ENCODE measurements at regions of chr15 and their contacts with region 1.

Region 1: GRCh38 chr15:40754883-40755811 is at the start of gene RMDN3:
- DNase-seq: peak; percentile 94
- H3K4me3 Mint-ChIP-seq: peak within 1 kb of the TSS; percentile 91
- H3K27ac Mint-ChIP-seq: peak within 1 kb of the TSS; percentile 97
- H3K4me1 Mint-ChIP-seq: peaks cover 38% of the 10 kb centered on the region
- H3K27me3 Mint-ChIP-seq: no peaks in the 10 kb centered on the region
- total RNA-seq, gene RMDN3: 39.0 and 42.2 TPM in 2 replicates

Region 2: DNA sequence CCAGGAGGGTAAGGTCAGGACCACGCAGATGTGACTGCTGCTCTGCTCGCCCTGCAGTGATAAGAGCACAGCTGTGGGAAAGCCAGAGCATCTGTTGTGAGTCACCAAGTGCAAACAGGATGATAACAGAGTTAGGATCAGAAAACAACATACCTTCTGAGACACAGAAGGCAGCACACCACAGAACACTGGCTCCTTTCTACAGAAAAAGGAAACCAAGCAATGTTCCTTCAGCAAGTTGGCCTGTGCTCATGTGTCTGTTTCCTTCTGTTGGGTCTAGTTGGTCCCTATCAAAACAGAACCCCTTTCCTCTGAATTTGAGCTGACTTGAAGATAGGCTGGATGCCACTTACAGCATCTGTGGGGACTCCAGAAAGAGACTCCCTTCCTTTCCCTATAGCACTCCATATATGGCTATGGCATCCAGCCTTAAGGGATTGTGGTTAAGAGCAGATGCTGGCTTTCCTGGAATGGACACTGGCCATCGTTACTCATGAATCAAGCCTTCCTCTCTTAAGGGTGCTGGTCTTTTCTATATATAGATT is 1615.0 kb before region 1 on chr15:
- intact Hi-C with region 1: no loop called
- DNase-seq: peak; percentile 14
- H3K4me3 Mint-ChIP-seq: no peak overlapping the region
- H3K27ac Mint-ChIP-seq: peak overlapping the region; percentile 37
- H3K4me1 Mint-ChIP-seq: peaks cover 54% of the 10 kb centered on the region
- H3K27me3 Mint-ChIP-seq: no peaks in the 10 kb centered on the region

Region 3: DNA sequence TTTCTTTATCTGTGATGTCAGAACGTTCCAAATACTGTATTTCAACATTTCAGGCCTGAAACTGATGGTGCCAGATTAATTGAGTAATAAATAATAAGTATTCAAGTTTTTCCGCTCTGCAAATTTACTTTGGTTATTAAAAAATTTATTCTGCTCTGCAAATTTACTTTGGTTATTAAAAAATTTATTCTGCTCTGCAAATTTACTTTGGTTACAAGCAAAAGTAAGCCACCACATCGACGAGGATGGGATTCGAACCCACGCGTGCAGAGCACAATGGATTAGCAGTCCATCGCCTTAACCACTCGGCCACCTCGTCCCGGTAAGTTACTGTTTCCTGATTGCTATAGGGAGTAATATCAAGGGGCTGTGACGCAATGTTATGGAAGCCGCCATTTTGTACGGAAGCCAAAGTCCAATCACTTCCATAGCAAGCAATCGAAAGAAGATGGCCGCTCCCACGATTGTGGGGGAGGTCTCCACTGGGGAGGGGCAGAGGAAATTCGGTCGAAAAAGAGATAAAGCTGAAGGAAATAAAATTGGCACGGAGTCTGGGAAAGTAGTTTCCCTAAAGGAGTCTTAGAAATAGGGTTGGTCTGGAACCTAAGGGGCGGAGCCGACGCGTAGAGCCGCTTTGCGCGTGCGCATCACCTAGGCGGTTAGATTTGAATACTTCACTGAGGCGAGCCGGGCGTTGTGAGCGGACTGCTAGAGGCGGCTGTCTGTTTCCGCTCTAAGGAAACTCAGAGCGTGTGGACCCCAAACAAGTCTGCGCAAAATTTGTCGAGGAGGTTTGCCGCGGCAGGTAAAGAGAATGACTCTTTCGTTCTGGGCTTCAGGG is 161.3 kb before region 1 on chr15 and contains the start of gene KNL1:
- intact Hi-C with region 1: loop called (anchors 2 kb)
- DNase-seq: peak; percentile 88
- H3K4me3 Mint-ChIP-seq: peak within 1 kb of the TSS; percentile 93
- H3K27ac Mint-ChIP-seq: peak within 1 kb of the TSS; percentile 98
- H3K4me1 Mint-ChIP-seq: peaks cover 45% of the 10 kb centered on the region
- H3K27me3 Mint-ChIP-seq: peaks cover 2% of the 10 kb centered on the region
- total RNA-seq, gene KNL1: 21.6 and 22.4 TPM in 2 replicates

Region 4: GRCh38 chr15:40914486-40914885 is 159.3 kb after region 1 on chr15:
- intact Hi-C with region 1: no loop called
- DNase-seq: no peak
- H3K4me3 Mint-ChIP-seq: no peak overlapping the region
- H3K27ac Mint-ChIP-seq: no peak overlapping the region
- H3K4me1 Mint-ChIP-seq: no peaks in the 10 kb centered on the region
- H3K27me3 Mint-ChIP-seq: peaks cover under 1% of the 10 kb centered on the region

Measured in activated T-helper 1 cell treated with anti-CD3 and anti-CD28 coated beads, Interleukin-12 subunit alpha, Interleukin-12 subunit beta, Interleukin-2, Interleukin-4 antibody, amounts not matched to agents 30 ng/mL and 10 ng/mL and 1 ng/mL, durations not matched to agents 14 hours and 24 hours and 36 hours (primary cell).